Heart right ventricle (tissue), 16 donors: ENCODE measurements at regions of chr22 and their contacts with region 1.

Region 1: DNA sequence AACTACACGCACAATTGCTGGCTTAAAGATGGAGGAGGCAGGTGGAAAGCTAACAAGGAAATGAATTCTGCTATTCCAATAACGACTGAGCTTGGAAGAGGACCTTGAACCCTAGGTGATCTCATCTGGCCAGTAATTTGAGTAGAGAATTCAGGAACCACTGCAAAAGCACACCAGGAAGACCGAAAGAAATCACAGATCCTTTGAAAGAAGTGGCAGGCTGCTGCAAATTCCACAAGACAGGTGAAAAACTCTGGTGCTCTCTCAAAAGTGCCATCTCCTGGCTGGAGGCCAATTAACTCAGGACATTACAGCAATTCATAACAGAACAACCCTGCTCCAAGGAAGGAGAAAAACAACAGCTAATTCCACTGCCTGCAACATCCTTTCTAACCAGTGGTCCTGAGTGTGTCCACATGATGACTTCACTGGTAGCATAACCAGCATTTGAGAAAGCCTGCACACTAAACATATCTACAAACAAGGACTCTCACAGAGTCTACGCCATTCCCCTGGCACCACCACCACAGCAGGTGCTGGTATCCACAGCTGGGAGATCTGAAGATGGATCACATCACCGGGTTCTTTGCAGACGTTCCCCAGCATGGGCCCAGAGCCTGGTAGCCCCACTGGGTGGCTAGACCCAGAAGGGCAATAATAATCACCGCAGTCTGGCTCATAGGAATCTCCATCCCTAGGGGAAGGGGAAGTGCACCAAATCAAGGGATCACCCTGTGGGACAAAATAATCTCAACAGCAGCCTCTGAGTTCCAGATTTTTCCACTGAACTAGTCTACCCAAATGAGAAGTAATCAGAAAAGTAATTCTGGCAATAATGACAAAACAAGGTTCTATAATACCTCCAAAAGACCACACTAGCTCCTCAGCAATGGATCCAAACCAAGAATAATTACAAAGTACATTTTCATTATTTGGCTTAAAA is 44.9 kb upstream of the CLTCL1 start:
- DNase-seq: no peak
- ATAC-seq: no peak
- H3K4me3 ChIP-seq: no peak overlapping the region
- H3K27ac ChIP-seq: no peak overlapping the region
- H3K4me1 ChIP-seq: no peaks in the 10 kb centered on the region
- H3K27me3 ChIP-seq: no peaks in the 10 kb centered on the region
- CTCF ChIP-seq: no peak

Region 2: GRCh38 chr22:19371893-19372292 is 35.5 kb after region 1 on chr22:
- intact Hi-C with region 1: loop called in 1 of 10 experiments (anchors 2 kb)
- DNase-seq: no peak
- ATAC-seq: no peak
- H3K4me3 ChIP-seq: no peak overlapping the region
- H3K27ac ChIP-seq: no peak overlapping the region
- H3K4me1 ChIP-seq: no peaks in the 10 kb centered on the region
- H3K27me3 ChIP-seq: no peaks in the 10 kb centered on the region
- CTCF ChIP-seq: no peak